ENCODE measurements at regions of chr2 and their contacts with region 1.

Region 1: GRCh38 chr2:181466661-181467576 is 9.7 kb downstream of the ITGA4 start:
- DNase-seq: peak; percentile 60
- H3K4me3 ChIP-seq: no peak overlapping the region
- H3K27ac ChIP-seq: no peak overlapping the region
- H3K4me1 ChIP-seq: peaks cover 8% of the 10 kb centered on the region
- H3K27me3 ChIP-seq: no peaks in the 10 kb centered on the region
- CTCF ChIP-seq: peak; percentile 94

Region 2: GRCh38 chr2:179592167-179592936 is 1874.6 kb before region 1 on chr2:
- CTCF ChIA-PET with region 1: no interaction called
- POLR2A ChIA-PET with region 1: no interaction called
- intact Hi-C with region 1: loop called (anchors 5 kb)
- DNase-seq: no peak
- H3K4me3 ChIP-seq: no peak overlapping the region
- H3K27ac ChIP-seq: no peak overlapping the region
- H3K4me1 ChIP-seq: no peaks in the 10 kb centered on the region
- H3K27me3 ChIP-seq: no peaks in the 10 kb centered on the region
- CTCF ChIP-seq: no peak

Region 3: DNA sequence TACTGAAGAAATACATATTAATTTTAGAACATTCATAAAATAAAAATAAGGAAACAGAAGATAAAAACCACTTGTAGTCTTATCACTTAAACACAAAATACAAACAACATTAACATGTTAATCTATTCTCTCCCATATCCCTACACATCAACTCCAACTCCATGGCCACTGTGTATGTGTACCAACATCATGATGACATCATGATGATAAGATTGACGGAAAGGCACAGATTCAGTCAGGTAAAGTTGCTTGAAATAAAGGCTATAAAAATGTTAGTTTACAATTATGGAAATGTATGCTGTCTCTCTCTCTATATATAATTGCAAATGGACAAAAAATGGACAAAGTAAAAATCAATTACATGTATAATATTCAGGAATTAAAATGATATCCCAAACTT is 875.0 kb before region 1 on chr2:
- CTCF ChIA-PET with region 1: no interaction called
- POLR2A ChIA-PET with region 1: no interaction called
- intact Hi-C with region 1: no loop called
- DNase-seq: no peak
- H3K4me3 ChIP-seq: no peak overlapping the region
- H3K27ac ChIP-seq: no peak overlapping the region
- H3K4me1 ChIP-seq: no peaks in the 10 kb centered on the region
- H3K27me3 ChIP-seq: no peaks in the 10 kb centered on the region
- CTCF ChIP-seq: no peak

Region 4: DNA sequence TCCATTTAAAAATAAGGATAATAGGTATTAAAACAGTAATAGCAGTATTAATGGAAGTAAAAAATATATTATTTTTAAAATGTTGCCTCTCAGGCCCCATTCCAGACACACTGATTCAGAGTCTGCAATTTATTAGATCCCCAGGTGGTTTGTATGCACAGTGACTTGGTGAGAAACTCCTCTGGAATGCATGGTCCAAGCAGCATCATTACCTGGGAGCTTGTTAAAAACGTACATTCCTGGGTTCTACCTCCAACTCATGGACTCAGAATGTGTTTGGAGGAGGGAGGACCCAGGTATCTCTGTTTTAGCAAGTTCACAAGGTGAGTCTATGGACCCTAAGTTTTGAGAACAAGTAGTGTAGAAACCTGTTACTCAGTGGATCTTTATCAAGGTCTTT is 85.9 kb after region 1 on chr2:
- CTCF ChIA-PET with region 1: no interaction called
- POLR2A ChIA-PET with region 1: no interaction called
- intact Hi-C with region 1: no loop called
- DNase-seq: no peak
- H3K4me3 ChIP-seq: no peak overlapping the region
- H3K27ac ChIP-seq: no peak overlapping the region
- H3K4me1 ChIP-seq: peaks cover 14% of the 10 kb centered on the region
- H3K27me3 ChIP-seq: no peaks in the 10 kb centered on the region
- CTCF ChIP-seq: no peak

Measured in A673 (cell line).